ENCODE measurements at regions of chr12 and their contacts with region 1.

Region 1: GRCh38 chr12:9925708-9926393 is 6.3 kb downstream of the CLEC2A start:
- DNase-seq: no peak
- H3K4me3 ChIP-seq: no peak overlapping the region
- H3K27ac ChIP-seq: no peak overlapping the region
- H3K4me1 ChIP-seq: no peaks in the 10 kb centered on the region
- H3K27me3 ChIP-seq: no peaks in the 10 kb centered on the region
- CTCF ChIP-seq: peak in 3 of 4 experiments; percentile 18 to 34 (median 27)
- EP300 ChIP-seq: no peak
- POLR2A ChIP-seq: no peak

Region 2: DNA sequence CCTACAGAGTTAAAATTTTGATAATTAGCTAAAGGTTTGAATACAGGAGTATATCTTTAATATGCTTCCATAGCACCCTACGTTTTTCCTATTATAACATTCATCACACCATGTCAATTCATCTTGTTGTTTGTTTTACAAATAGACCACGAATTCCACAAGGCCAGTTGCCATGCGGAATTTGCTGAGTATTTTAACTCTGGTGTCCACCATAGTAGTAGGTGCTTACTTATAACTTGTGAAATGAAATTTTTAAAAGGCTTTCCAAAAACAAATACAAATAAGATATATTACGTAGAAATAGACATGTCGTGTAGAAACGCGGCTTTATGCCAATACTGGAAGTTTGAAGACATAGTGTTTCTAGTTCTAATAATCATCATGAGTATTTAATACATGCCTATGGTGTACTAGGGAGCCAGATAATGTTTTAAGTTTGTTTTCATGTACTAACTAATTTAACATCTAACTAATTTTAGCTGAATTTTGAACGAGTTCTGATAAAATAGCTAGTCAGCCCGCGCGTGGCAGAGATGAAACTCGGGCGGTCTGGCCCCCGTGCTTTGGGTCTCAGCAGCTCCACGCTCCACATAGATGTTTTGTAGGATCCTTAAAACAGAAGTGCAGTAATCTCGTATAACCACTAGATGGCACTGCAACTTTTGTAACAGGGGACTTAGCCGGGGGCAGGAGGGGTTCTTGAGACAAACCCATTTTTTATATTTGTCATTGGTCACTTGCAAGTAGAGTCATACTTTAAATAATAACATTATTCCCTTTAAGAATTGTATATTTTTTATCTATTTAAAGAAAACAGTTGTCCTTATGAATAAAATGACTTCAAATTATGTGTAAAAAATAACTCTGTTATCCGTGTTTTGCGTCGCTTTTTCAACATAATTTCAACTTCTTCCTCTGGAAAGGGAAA is 175.3 kb before region 1 on chr12:
- intact Hi-C with region 1: loop called (anchors 2 kb)
- DNase-seq: peak; percentile 69
- H3K4me3 ChIP-seq: peak overlapping the region in 1 of 4 donors; percentile 14
- H3K27ac ChIP-seq: no peak overlapping the region
- H3K4me1 ChIP-seq: peaks cover 0 to 9% (median 0%) of the 10 kb centered on the region in 4 donors
- H3K27me3 ChIP-seq: no peaks in the 10 kb centered on the region
- CTCF ChIP-seq: peak; percentile 21 to 85 (median 64)
- EP300 ChIP-seq: no peak
- POLR2A ChIP-seq: no peak

Region 3: DNA sequence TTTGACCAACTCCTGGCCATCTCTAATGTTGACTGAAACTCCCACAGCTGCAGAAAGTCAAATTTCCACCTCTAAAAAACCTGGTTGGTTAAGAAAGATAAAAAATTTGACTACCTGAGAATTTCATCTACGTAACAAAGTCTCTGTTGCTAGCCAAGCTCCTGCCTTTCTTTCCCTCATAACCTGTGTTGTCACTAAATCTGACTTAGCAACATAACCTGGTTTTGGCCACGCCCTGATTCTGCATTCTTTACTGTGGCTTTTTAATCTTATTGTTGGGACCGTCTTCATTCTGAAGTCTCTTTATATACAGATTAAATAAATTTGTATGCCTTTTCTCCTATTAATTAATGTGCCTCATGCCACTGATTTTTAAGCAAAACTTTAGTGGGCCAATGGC is 149.1 kb before region 1 on chr12:
- intact Hi-C with region 1: no loop called
- DNase-seq: no peak
- H3K4me3 ChIP-seq: no peak overlapping the region
- H3K27ac ChIP-seq: no peak overlapping the region
- H3K4me1 ChIP-seq: no peaks in the 10 kb centered on the region
- H3K27me3 ChIP-seq: no peaks in the 10 kb centered on the region
- CTCF ChIP-seq: no peak
- EP300 ChIP-seq: no peak
- POLR2A ChIP-seq: no peak

Region 4: GRCh38 chr12:9813821-9814809 is 111.7 kb before region 1 on chr12:
- intact Hi-C with region 1: loop called (anchors 10 kb)
- DNase-seq: peak; percentile 77
- H3K4me3 ChIP-seq: peak overlapping the region in 2 of 4 donors; percentile 1 to 22
- H3K27ac ChIP-seq: no peak overlapping the region
- H3K4me1 ChIP-seq: no peaks in the 10 kb centered on the region
- H3K27me3 ChIP-seq: no peaks in the 10 kb centered on the region
- CTCF ChIP-seq: peak; percentile 20 to 55 (median 38)
- EP300 ChIP-seq: no peak
- POLR2A ChIP-seq: no peak

Region 5: GRCh38 chr12:9870286-9870866 is 55.5 kb before region 1 on chr12:
- intact Hi-C with region 1: no loop called
- DNase-seq: no peak
- H3K4me3 ChIP-seq: peak overlapping the region; percentile 13 to 48 (median 40)
- H3K27ac ChIP-seq: peak overlapping the region; percentile 67 to 77 (median 71)
- H3K4me1 ChIP-seq: no peaks in the 10 kb centered on the region
- H3K27me3 ChIP-seq: no peaks in the 10 kb centered on the region
- CTCF ChIP-seq: no peak
- EP300 ChIP-seq: no peak
- POLR2A ChIP-seq: no peak